Naive thymus-derived CD8-positive, alpha-beta T cell (primary cell): ENCODE measurements at regions of chr2 and their contacts with region 1.

Region 1: DNA sequence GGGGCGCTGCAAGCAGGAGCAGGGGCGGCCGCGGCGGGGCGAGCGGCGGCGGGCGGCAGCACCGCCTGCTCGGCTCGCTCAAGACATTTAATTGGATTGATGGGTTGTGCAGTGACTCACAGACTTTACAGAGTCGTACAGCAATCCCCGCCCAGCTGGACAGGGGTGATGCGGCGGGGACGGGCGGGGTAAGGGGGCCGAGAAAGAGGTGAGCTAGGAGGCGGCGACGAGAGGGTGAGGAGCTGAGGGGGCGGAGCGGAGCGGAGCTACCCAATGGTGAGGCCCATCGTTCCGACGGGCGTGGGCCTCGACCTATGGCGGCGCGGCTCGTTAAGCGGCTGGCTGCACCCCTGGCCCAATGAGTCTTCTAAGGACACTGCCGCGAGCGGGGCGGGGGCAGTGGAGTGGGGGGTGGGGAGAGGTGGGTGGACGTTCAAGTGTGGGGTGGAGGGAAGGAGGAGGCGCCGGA is 97.1 kb upstream of the SERTAD2 start:
- DNase-seq: peak; percentile 92 to 99 (median 97)
- ATAC-seq: peak; percentile 83 to 86
- H3K4me3 Mint-ChIP-seq: peak overlapping the region; percentile 88 to 100 (median 98)
- H3K27ac Mint-ChIP-seq: peak overlapping the region; percentile 91 to 99 (median 96)
- H3K4me1 Mint-ChIP-seq: peaks cover 12 to 29% (median 25%) of the 10 kb centered on the region in 4 donors
- H3K27me3 Mint-ChIP-seq: no peaks in the 10 kb centered on the region

Region 2: GRCh38 chr2:64609227-64609941 is 141.5 kb before region 1 on chr2:
- POLR2A ChIA-PET with region 1: interaction called, 20 read pairs
- DNase-seq: peak; percentile 47 to 80 (median 74)
- ATAC-seq: peak; percentile 67 to 84
- H3K4me3 Mint-ChIP-seq: peak overlapping the region; percentile 61 to 89 (median 78)
- H3K27ac Mint-ChIP-seq: peak overlapping the region; percentile 60 to 90 (median 80)
- H3K4me1 Mint-ChIP-seq: peaks cover 4 to 30% (median 25%) of the 10 kb centered on the region in 4 donors
- H3K27me3 Mint-ChIP-seq: no peaks in the 10 kb centered on the region

Region 3: DNA sequence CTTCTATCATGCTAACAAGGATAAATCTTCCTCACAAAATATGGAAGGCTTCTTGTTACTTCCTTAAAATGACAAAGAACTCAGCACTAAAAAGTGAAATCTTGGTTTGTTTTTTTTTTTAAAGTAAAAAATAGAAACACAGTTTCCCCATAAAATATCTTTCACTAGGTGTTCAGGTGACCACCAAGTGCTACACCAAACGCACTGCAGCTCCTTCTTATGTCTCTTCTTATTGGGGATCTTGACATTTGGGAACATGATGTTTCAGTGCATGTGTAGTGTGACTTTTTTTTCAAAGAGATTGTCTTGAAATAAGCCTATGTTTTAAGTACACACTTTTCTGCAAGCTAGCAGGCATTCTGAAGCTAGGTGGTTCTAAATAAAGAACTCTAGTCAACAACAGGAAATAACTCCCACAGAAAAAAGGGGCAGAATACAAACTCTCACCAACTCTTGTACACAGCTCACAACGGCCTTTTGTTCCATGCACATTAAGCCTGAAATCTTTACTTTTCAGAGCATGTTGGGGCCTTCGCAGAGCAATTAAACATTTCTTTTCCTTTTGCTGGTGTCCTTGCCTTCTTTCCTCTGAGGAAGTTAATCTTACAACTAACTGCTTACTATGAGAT is 83.9 kb before region 1 on chr2:
- POLR2A ChIA-PET with region 1: interaction called, 67 read pairs
- DNase-seq: peak in 2 of 10 donors; percentile 40 to 43
- ATAC-seq: peak; percentile 83 to 85
- H3K4me3 Mint-ChIP-seq: peak overlapping the region in 9 of 10 donors; percentile 11 to 78 (median 59)
- H3K27ac Mint-ChIP-seq: peak overlapping the region in 4 of 10 donors; percentile 26 to 91 (median 84)
- H3K4me1 Mint-ChIP-seq: peaks cover 28 to 51% (median 37%) of the 10 kb centered on the region in 4 donors
- H3K27me3 Mint-ChIP-seq: no peaks in the 10 kb centered on the region

Region 4: DNA sequence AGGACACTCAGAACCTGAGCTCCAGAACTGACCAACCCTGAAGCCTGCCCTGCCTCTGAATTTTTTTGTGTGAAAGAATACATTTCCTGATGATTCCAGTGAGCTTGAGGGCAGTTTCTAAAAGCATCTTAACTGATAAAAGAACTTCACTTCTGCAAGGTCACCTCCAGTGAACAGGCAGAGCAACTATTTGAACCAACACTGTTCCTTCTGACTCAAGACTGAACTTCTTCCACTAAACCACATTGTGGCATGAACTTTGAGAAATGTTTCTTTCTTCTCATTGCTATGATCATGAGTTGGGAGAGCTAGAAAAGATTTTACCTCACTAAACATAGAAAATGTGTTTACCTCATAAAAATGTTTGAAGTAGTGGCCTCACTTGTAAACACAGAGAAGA is 13.3 kb before region 1 on chr2:
- POLR2A ChIA-PET with region 1: interaction called, 47 read pairs
- DNase-seq: no peak
- ATAC-seq: peak in 1 of 2 donors; percentile 36
- H3K4me3 Mint-ChIP-seq: no peak overlapping the region
- H3K27ac Mint-ChIP-seq: peak overlapping the region in 3 of 10 donors; percentile 4 to 73 (median 37)
- H3K4me1 Mint-ChIP-seq: peaks cover 8 to 21% (median 15%) of the 10 kb centered on the region in 4 donors
- H3K27me3 Mint-ChIP-seq: no peaks in the 10 kb centered on the region

Region 5: GRCh38 chr2:64792307-64792706 is 41.5 kb after region 1 on chr2:
- POLR2A ChIA-PET with region 1: no interaction called
- DNase-seq: no peak
- ATAC-seq: no peak
- H3K4me3 Mint-ChIP-seq: no peak overlapping the region
- H3K27ac Mint-ChIP-seq: no peak overlapping the region
- H3K4me1 Mint-ChIP-seq: peaks cover 0 to 2% (median 0%) of the 10 kb centered on the region in 4 donors
- H3K27me3 Mint-ChIP-seq: no peaks in the 10 kb centered on the region

Region 6: GRCh38 chr2:64819774-64820696 is 69.2 kb after region 1 on chr2:
- POLR2A ChIA-PET with region 1: interaction called, 35 read pairs
- DNase-seq: peak in 9 of 10 donors; percentile 7 to 84 (median 58)
- ATAC-seq: peak; percentile 97 to 98
- H3K4me3 Mint-ChIP-seq: peak overlapping the region; percentile 44 to 89 (median 76)
- H3K27ac Mint-ChIP-seq: peak overlapping the region; percentile 91 to 100 (median 97)
- H3K4me1 Mint-ChIP-seq: peaks cover 18 to 55% (median 42%) of the 10 kb centered on the region in 4 donors
- H3K27me3 Mint-ChIP-seq: no peaks in the 10 kb centered on the region